WTC11 (cell line): ENCODE measurements at regions of chrX and their contacts with region 1.

Region 1: GRCh38 chrX:65596270-65597034 is 61.9 kb upstream of the LAS1L start:
- DNase-seq: no peak
- ATAC-seq: no peak
- H3K4me3 Mint-ChIP-seq: no peak overlapping the region
- H3K27ac Mint-ChIP-seq: no peak overlapping the region
- H3K4me1 Mint-ChIP-seq: peaks cover 5% of the 10 kb centered on the region; the same call in 1 of the 2 replicates
- H3K27me3 Mint-ChIP-seq: peaks cover 7% of the 10 kb centered on the region; the same call in 1 of the 2 replicates
- CTCF ChIP-seq: no peak

Region 2: DNA sequence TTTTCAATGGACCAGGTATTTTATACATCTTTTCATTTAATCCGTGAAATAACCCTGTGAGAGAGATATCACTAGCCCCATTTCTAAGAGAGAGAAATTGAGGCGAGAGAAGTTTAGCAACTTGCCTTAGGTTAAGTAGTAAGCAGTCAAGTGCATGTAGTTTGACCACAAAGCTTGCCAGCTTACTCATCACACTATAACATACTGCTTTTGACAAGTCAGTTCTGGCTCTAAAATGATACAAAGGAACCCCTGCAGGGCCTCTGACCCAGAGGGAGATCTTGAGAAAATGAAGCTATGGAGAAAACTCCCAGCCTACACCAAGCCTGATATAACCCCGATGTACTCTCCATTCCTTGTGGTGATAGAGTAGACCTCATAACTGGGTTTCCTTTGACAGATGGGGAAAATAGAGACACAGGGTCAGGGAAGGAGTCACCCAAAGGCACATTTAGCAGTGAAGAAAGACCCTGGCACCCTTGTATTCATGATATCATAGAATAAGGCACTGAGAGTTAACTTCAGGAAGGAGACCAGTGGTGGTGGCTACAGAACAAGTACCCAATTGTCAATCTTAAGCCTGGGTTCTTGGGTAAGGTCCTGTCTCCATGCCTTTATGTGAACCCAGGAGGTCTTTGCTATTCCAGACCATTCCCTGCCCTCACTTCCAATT is 10.8 kb after region 1 on chrX:
- CTCF ChIA-PET with region 1: no interaction called
- POLR2A ChIA-PET with region 1: no interaction called
- DNase-seq: no peak
- ATAC-seq: no peak
- H3K4me3 Mint-ChIP-seq: no peak overlapping the region
- H3K27ac Mint-ChIP-seq: no peak overlapping the region
- H3K4me1 Mint-ChIP-seq: no peaks in the 10 kb centered on the region
- H3K27me3 Mint-ChIP-seq: peaks cover 4% of the 10 kb centered on the region
- CTCF ChIP-seq: no peak

Region 3: DNA sequence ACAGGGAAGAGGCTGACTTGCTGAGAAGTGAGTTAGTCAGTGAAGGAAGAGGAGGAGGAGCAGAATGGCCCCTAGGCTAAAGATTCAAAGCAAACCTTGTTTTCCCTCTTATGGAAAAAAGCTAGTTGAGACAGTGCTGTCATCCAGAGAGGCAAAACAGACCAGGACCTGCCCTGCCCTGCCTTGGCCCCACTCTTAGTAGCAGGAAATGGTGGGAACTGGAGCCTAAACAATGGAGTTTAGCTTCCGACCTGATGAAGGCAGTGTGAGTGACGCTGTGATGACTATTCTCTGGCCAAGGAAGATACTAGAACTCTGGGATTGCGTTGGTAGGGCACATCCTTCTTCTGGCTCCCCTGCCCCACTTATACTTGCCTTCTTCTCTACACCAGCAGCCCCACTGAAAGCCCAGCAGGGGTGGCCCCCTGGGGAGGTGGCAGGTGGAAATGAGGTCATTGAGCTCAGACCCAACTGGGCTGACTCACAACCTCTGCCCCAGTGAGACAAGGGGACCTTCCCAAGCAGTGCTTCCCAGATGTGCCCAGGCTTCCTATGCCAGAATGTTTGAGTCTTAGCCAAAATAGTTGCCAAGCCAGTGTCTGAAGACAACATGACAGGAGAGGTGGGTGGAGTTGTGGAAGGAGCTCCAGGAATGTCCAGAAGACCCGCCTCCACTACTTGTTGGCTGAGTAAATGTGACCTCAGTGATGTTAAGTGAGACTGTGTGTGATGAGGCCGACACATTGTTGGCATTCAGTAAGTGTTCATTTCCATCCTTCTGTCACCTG is 109.8 kb after region 1 on chrX:
- CTCF ChIA-PET with region 1: interaction called, 10 read pairs
- POLR2A ChIA-PET with region 1: no interaction called
- DNase-seq: no peak
- ATAC-seq: no peak
- H3K4me3 Mint-ChIP-seq: no peak overlapping the region
- H3K27ac Mint-ChIP-seq: peak overlapping the region; percentile 24; the same call in 1 of the 2 replicates
- H3K4me1 Mint-ChIP-seq: peaks cover 28% of the 10 kb centered on the region
- H3K27me3 Mint-ChIP-seq: no peaks in the 10 kb centered on the region
- CTCF ChIP-seq: no peak